ENCODE measurements at regions of chr13 and their contacts with region 1.

Region 1: DNA sequence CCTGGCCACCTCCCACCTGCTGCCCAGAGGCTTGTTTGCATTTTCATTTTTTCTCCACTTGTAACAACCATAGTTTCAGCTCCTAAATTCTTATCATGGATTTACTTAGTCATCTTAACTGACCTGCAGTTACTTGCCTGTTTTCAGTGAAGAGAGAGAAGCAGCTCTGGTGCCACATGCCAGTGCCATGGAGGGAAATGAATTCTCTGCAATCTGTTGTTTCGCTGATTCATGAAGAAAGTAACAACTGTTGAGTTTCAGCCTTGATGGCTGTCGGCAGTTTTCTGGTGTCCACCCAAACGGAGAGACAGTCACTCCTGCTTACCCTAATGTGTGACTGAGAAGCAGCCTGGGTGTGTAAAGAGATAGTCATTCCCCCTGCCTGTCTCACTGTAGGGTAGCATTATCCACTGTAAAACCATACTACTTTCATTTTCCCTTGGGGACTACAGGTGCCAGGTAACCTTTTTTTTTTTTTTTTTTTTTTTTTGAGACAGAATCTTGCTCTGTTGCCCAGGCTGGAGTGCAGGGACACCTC is 116.1 kb downstream of the DNAJC3 start:
- DNase-seq: no peak
- H3K4me3 ChIP-seq: no peak overlapping the region
- H3K27ac ChIP-seq: no peak overlapping the region
- H3K4me1 ChIP-seq: no peaks in the 10 kb centered on the region
- H3K27me3 ChIP-seq: no peaks in the 10 kb centered on the region
- CTCF ChIP-seq: no peak

Region 2: GRCh38 chr13:95391362-95391761 is 401.7 kb before region 1 on chr13:
- CTCF ChIA-PET with region 1: no interaction called
- POLR2A ChIA-PET with region 1: no interaction called
- intact Hi-C with region 1: no loop called
- DNase-seq: no peak
- H3K4me3 ChIP-seq: no peak overlapping the region
- H3K27ac ChIP-seq: no peak overlapping the region
- H3K4me1 ChIP-seq: peaks cover 8% of the 10 kb centered on the region
- H3K27me3 ChIP-seq: no peaks in the 10 kb centered on the region
- CTCF ChIP-seq: no peak

Region 3: GRCh38 chr13:95438297-95438696 is 354.8 kb before region 1 on chr13:
- CTCF ChIA-PET with region 1: no interaction called
- POLR2A ChIA-PET with region 1: no interaction called
- intact Hi-C with region 1: no loop called
- DNase-seq: no peak
- H3K4me3 ChIP-seq: no peak overlapping the region
- H3K27ac ChIP-seq: no peak overlapping the region
- H3K4me1 ChIP-seq: no peaks in the 10 kb centered on the region
- H3K27me3 ChIP-seq: no peaks in the 10 kb centered on the region
- CTCF ChIP-seq: no peak

Region 4: DNA sequence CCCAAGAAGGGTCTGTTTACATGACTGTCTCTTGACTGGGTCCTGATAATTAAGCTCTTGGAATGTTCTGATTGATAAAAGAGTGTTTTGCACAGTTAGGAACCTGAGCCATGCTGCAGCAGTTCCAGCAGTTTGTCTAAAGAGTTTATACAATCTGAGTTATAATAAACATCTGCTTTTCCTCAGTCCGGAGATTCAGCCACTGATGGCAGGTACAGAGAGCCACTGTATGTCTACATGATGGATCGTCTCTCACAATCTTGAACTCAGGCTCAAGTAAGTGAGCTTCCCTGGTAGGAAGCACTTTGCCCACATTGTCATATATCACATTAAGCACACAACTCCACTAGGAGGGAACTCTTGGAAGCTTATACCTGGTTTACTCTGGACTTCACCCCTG is 175.8 kb after region 1 on chr13:
- CTCF ChIA-PET with region 1: no interaction called
- POLR2A ChIA-PET with region 1: interaction called, 16 read pairs
- intact Hi-C with region 1: no loop called
- DNase-seq: no peak
- H3K4me3 ChIP-seq: no peak overlapping the region
- H3K27ac ChIP-seq: no peak overlapping the region
- H3K4me1 ChIP-seq: no peaks in the 10 kb centered on the region
- H3K27me3 ChIP-seq: no peaks in the 10 kb centered on the region
- CTCF ChIP-seq: no peak

Measured in A673 (cell line).